ENCODE measurements at regions of chrX and their contacts with region 1.

Region 1: DNA sequence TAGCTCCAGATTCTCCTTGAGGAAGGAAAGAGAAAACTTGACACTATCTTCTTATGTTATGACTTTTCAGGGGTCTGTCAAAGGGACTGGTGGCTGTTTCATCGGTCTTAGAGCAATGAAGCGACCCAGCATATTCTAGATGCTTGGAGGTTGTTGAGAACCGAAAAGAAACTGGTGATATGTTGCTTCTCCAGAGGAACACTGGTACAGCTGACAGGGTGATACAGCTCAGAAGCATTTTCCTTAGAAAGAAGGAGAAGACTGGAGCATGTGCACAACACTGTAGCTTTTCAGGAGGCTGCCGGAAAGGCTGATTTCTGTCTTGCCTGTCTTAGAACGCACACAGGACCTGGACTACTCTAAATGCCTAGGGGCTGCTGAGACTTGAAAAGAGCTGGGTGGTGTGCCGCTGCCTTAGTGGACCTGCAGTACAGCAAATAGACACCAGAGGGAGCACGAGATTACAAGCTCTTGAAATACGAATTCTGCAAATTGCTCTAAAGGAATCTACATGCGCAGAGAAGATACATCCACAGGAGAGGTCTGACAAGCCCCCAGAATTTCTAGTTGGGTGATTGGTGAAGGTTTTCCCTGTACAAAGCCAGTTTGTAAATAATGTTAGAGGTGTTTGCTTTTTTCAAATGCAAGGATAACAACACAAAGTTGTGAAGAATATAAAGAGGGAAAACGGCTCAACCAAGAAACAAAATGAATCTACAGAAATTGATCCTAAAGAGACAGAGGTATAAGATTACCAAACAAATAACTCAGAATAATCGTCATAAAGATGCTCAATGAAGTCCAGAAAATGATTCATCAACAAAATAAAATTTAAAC is 223.1 kb upstream of the DMD start:
- DNase-seq: peak; percentile 52
- ATAC-seq: no peak
- H3K4me3 Mint-ChIP-seq: no peak overlapping the region
- H3K27ac Mint-ChIP-seq: no peak overlapping the region
- H3K4me1 Mint-ChIP-seq: no peaks in the 10 kb centered on the region
- H3K27me3 Mint-ChIP-seq: no peaks in the 10 kb centered on the region

Region 2: DNA sequence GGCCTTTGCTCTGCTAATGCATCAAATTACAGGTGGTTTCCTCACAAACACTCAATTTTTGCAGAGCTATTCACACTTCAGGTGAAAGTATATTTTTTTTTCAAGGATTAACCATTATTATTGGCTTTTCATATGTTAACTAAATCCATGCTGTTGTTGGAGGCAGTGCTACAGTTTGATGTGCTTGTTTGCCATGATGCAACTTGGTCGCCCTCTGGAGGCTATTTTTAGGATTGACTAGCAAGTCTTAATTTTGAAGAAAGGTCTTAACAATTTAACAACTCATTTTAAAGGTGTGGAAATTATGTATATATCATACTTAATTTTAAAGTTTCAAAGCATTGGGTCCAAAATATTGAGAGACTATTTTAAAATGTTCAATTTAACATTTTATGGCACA is 866.4 kb after region 1 on chrX:
- CTCF ChIA-PET with region 1: interaction called, 5 read pairs
- POLR2A ChIA-PET with region 1: no interaction called
- intact Hi-C with region 1: loop called (anchors 1 to 2 kb)
- DNase-seq: peak; percentile 29
- ATAC-seq: no peak
- H3K4me3 Mint-ChIP-seq: no peak overlapping the region
- H3K27ac Mint-ChIP-seq: no peak overlapping the region
- H3K4me1 Mint-ChIP-seq: no peaks in the 10 kb centered on the region
- H3K27me3 Mint-ChIP-seq: no peaks in the 10 kb centered on the region

Measured in activated CD4-positive, alpha-beta T cell treated with anti-CD3 and anti-CD28 coated beads for 36 hours (primary cell).